ENCODE measurements at regions of chr6 and their contacts with region 1.

Region 1: GRCh38 chr6:12114055-12114503 is 102.0 kb downstream of the HIVEP1 start:
- DNase-seq: no peak
- H3K4me3 Mint-ChIP-seq: no peak overlapping the region
- H3K27ac Mint-ChIP-seq: peak overlapping the region; percentile 42
- H3K4me1 Mint-ChIP-seq: peaks cover 67% of the 10 kb centered on the region
- H3K27me3 Mint-ChIP-seq: no peaks in the 10 kb centered on the region

Region 2: DNA sequence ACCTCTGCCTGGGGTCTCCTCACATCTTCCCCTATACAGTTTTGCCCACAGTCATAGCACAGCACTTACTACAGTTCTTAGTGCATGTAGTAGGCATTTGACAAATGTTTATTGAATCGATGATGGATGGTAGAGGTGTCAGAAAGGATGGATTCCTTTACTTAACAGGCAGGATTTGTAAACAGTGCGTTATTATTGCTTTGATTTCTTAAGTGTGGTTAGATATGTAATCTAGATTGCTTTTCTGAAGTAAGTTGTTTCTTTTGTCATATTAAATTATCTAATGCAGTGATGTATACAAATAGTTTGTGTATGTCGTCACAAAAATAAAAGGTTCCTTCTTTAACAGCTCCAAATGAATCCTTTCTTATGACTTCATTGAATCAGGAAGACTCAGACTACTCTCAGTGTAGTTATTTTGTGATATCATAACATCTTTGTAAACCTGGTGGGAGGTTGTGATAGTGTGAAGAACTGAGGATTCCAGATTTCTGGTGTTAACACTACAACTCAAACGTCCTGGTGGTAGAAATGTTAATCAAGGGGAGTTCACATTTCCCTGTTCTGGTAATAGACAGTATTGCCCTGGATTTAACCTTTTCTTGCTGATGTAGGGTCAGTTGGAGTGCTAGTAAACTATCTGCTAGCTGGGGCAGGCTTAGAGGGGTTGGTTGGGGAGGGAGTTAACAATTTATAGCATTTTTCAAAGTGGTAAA is 14.3 kb before region 1 on chr6:
- CTCF ChIA-PET with region 1: interaction called, 3 read pairs
- POLR2A ChIA-PET with region 1: no interaction called
- intact Hi-C with region 1: loop called (anchors 2 kb)
- DNase-seq: no peak
- H3K4me3 Mint-ChIP-seq: no peak overlapping the region
- H3K27ac Mint-ChIP-seq: no peak overlapping the region
- H3K4me1 Mint-ChIP-seq: peaks cover 28% of the 10 kb centered on the region
- H3K27me3 Mint-ChIP-seq: no peaks in the 10 kb centered on the region

Measured in activated CD4-positive, alpha-beta memory T cell treated with anti-CD3 and anti-CD28 coated beads for 36 hours (primary cell).